ENCODE measurements at regions of chr3 and their contacts with region 1.

Region 1: DNA sequence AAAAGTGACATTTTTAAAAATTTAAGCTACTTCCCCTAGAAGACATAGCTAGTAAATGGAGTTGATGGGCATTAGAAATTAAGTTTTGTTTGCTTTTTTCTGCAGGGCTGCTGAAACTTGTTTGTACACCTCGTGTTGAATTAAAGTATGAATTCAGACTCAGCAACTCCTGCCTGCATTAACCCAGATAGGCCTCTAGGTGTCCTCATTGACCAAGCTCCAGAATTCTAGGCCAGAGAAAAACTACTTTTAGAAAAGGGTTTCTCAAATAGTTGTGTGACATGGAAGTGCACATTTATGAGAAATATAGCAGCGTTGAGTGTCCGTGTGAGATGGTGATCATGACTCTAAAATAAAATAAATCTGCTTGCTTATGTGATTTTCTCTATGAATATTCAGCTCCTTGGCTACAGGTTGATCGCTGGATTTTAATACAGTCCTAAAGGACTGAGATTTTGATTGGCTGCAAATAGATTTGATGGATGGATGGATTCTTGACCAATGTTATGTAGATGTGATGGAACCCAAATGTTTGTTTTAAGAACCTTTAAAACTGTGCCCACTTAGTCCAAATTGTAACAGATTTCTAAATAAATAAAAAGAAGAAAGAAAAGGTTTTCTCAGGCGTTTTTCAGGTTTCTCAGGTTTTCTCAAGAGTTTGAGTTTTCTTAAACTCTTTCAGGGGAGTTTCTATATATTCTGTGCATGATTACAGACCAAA is 39.4 kb upstream of the LMOD3 start:
- DNase-seq: no peak
- ATAC-seq: peak; percentile 89 to 95 (median 92)
- H3K4me3 ChIP-seq: no peak overlapping the region
- H3K27ac ChIP-seq: no peak overlapping the region
- H3K4me1 ChIP-seq: peaks cover 0 to 3% (median 1%) of the 10 kb centered on the region in 4 donors
- H3K27me3 ChIP-seq: no peaks in the 10 kb centered on the region
- CTCF ChIP-seq: peak; percentile 90 to 99 (median 94)
- POLR2A ChIP-seq: no peak

Region 2: GRCh38 chr3:68832680-68833079 is 329.1 kb before region 1 on chr3:
- intact Hi-C with region 1: no loop called
- DNase-seq: no peak
- ATAC-seq: no peak
- H3K4me3 ChIP-seq: no peak overlapping the region
- H3K27ac ChIP-seq: no peak overlapping the region
- H3K4me1 ChIP-seq: no peaks in the 10 kb centered on the region
- H3K27me3 ChIP-seq: no peaks in the 10 kb centered on the region
- CTCF ChIP-seq: no peak
- POLR2A ChIP-seq: no peak

Region 3: DNA sequence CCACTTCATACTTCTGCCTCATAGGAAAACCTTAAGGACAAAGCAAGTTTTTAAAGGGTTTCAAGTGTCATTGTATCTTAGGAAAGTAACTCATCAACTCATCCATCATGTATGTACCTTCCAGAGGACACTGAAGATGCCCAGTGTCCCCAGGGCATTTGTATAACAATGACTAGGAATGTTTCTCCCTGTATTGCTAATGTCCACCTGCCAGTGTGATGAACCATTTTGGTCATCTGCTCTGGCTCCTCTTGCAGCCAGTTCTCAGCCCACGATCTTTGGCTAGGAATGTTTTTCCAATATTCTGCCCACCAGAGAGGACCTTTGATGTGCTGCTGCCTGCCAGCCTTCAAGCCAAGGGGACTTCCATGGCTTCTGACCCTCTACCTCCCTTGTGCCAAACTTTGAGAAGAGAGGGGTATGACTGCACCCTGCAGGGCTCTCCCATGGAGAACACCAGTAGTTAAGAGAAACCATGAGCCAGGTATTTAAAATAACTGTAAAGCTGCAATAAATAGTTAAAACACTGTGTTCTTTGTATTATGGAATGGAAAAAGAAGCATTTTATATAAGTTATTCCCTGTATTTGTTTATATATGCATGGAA is 50.7 kb before region 1 on chr3:
- intact Hi-C with region 1: no loop called
- DNase-seq: no peak
- ATAC-seq: peak in 2 of 4 donors; percentile 26 to 29
- H3K4me3 ChIP-seq: no peak overlapping the region
- H3K27ac ChIP-seq: no peak overlapping the region
- H3K4me1 ChIP-seq: no peaks in the 10 kb centered on the region
- H3K27me3 ChIP-seq: no peaks in the 10 kb centered on the region
- CTCF ChIP-seq: no peak
- POLR2A ChIP-seq: no peak

Region 4: GRCh38 chr3:69250014-69250413 is 88.3 kb after region 1 on chr3:
- intact Hi-C with region 1: no loop called
- DNase-seq: peak; percentile 49 to 85 (median 61)
- ATAC-seq: peak; percentile 82 to 91 (median 84)
- H3K4me3 ChIP-seq: peak overlapping the region; percentile 29 to 55 (median 46)
- H3K27ac ChIP-seq: peak overlapping the region; percentile 24 to 66 (median 45)
- H3K4me1 ChIP-seq: peaks cover 0 to 33% (median 4%) of the 10 kb centered on the region in 4 donors
- H3K27me3 ChIP-seq: no peaks in the 10 kb centered on the region
- CTCF ChIP-seq: no peak
- POLR2A ChIP-seq: peak; percentile 54

Region 5: GRCh38 chr3:69306239-69307185 is 144.8 kb after region 1 on chr3:
- intact Hi-C with region 1: loop called (anchors 5 to 10 kb)
- DNase-seq: peak; percentile 59 to 78 (median 71)
- ATAC-seq: peak; percentile 100
- H3K4me3 ChIP-seq: no peak overlapping the region
- H3K27ac ChIP-seq: no peak overlapping the region
- H3K4me1 ChIP-seq: peaks cover 0 to 4% (median 0%) of the 10 kb centered on the region in 4 donors
- H3K27me3 ChIP-seq: no peaks in the 10 kb centered on the region
- CTCF ChIP-seq: peak; percentile 94 to 97 (median 95)
- POLR2A ChIP-seq: no peak

Region 6: GRCh38 chr3:69410250-69410649 is 248.5 kb after region 1 on chr3:
- intact Hi-C with region 1: loop called in 1 of 2 experiments (anchors 10 kb)
- DNase-seq: peak; percentile 43 to 77 (median 58)
- ATAC-seq: peak; percentile 92 to 93 (median 92)
- H3K4me3 ChIP-seq: no peak overlapping the region
- H3K27ac ChIP-seq: no peak overlapping the region
- H3K4me1 ChIP-seq: peaks cover 0 to 8% (median 0%) of the 10 kb centered on the region in 4 donors
- H3K27me3 ChIP-seq: no peaks in the 10 kb centered on the region
- CTCF ChIP-seq: peak; percentile 77 to 86 (median 80)
- POLR2A ChIP-seq: no peak

Region 7: GRCh38 chr3:69671082-69671952 is 509.6 kb after region 1 on chr3:
- intact Hi-C with region 1: loop called in 1 of 2 experiments (anchors 10 kb)
- DNase-seq: no peak
- ATAC-seq: peak; percentile 57 to 75 (median 64)
- H3K4me3 ChIP-seq: no peak overlapping the region
- H3K27ac ChIP-seq: no peak overlapping the region
- H3K4me1 ChIP-seq: no peaks in the 10 kb centered on the region
- H3K27me3 ChIP-seq: no peaks in the 10 kb centered on the region
- CTCF ChIP-seq: peak; percentile 73 to 77 (median 73)
- POLR2A ChIP-seq: no peak

Measured in right lobe of liver (tissue), 6 donors.